PC-9 (cell line): ENCODE measurements at regions of chr14 and their contacts with region 1.

Region 1: GRCh38 chr14:33914676-33915516 is 36.0 kb downstream of the EGLN3 start:
- DNase-seq: peak; percentile 62 to 85
- H3K4me3 ChIP-seq: no peak overlapping the region
- H3K27ac ChIP-seq: 0 out of 2 replicates have a peak overlapping the region, but pooled peaks have one; percentile 25
- H3K4me1 ChIP-seq: peaks cover 33% of the 10 kb centered on the region
- H3K27me3 ChIP-seq: no peaks in the 10 kb centered on the region
- CTCF ChIP-seq: no peak

Region 2: DNA sequence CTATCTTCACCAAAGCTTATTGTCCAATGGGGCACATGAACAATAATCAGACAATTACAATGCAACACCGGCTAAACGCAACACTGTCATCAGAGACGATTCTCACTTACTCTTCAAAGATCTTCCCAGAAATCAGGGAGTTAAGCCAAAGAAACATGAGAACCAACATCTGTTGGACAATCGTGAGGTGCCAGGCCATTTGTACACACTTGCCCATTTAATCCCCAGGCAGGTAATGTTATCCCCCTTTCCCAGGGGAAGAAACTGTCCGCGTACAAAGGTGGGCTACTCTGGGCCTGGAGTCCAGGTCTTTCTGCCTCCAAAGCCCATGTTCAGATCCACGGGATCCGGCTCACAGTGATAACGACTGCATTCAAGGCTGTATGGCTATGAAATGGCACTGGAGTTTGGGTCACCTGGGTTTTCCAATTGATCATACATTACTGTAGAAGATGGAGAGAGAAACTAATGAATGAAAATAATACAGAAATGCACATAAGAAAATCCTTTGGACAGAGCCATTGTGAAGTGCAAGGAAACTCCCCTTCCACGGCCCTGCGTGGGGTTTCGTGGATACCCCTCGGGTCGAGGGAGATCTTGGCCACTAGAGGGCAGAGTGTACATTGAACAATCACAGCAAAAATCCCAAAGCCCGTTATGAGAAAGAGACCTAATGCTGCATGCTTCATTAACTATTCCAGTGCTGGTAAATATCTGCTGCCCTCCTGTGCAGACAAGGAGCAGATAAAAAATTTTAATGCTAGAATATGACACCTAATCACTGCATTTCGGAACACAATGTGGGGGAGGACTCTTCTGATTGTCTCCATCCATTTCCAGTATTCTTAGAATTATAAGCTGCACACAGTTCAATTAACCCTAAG is 75.5 kb before region 1 on chr14:
- CTCF ChIA-PET with region 1: no interaction called
- POLR2A ChIA-PET with region 1: no interaction called
- intact Hi-C with region 1: loop called (anchors 2 kb)
- DNase-seq: peak in 1 of 2 experiments; percentile 11
- H3K4me3 ChIP-seq: no peak overlapping the region
- H3K27ac ChIP-seq: no peak overlapping the region
- H3K4me1 ChIP-seq: peaks cover 30% of the 10 kb centered on the region
- H3K27me3 ChIP-seq: no peaks in the 10 kb centered on the region
- CTCF ChIP-seq: peak; percentile 81

Region 3: GRCh38 chr14:33938131-33938949 is 23.4 kb after region 1 on chr14:
- CTCF ChIA-PET with region 1: no interaction called
- POLR2A ChIA-PET with region 1: no interaction called
- intact Hi-C with region 1: loop called (anchors 1 kb)
- DNase-seq: peak; percentile 82 to 85
- H3K4me3 ChIP-seq: peak overlapping the region; percentile 51; the same call in 1 of the 2 replicates
- H3K27ac ChIP-seq: peak overlapping the region; percentile 85
- H3K4me1 ChIP-seq: peaks cover 45% of the 10 kb centered on the region
- H3K27me3 ChIP-seq: no peaks in the 10 kb centered on the region
- CTCF ChIP-seq: no peak

Region 4: DNA sequence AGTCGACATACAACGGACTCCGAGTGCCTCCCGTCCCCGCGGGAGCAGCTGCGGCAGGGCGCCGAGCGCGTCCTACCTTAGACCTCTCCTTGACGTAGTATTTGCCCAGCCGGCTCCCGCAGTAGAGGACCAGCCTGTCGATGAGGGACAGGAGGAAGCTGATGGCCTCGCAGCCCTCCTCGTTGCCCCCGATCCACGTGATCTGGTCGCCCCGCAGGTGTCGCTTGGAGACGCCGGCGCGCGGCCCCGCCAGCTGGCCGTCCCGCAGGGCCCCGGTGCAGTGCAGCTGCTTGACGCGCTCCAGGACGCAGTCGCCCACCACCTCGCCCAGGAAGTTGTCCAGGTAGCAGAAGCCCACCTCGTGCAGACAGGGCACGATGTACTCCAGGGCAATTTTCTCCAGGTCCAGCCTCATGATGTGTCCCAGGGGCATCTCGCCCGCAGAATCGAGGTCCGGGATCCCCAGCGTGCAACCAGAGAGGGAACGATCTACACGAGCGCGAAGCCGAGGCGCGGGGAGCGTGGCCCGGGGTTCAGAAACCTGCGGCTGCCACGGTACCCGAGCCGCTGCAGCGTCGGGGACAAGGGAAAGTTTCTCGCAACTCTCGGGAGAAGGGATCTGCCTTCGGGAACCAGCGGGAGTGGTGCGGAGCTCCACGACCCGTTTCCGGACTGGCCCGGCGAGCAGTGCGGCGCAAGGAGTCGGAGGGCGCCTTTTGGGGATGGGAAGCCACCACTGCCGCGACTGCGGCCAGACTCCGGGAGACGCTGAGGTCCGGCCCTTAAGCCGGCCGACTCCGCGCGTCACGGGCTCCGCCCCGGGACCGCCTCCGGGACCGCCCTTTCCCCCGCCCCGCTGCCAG is 35.7 kb after region 1 on chr14 and contains the start of gene EGLN3:
- CTCF ChIA-PET with region 1: no interaction called
- POLR2A ChIA-PET with region 1: no interaction called
- intact Hi-C with region 1: loop called (anchors 2 kb)
- DNase-seq: peak; percentile 71 to 90
- H3K4me3 ChIP-seq: peak within 1 kb of the TSS; percentile 82
- H3K27ac ChIP-seq: peak within 1 kb of the TSS; percentile 73
- H3K4me1 ChIP-seq: peaks cover 27% of the 10 kb centered on the region
- H3K27me3 ChIP-seq: no peaks in the 10 kb centered on the region
- CTCF ChIP-seq: no peak
- total RNA-seq, gene EGLN3: 22.6 and 23.6 TPM in 2 replicates

Region 5: DNA sequence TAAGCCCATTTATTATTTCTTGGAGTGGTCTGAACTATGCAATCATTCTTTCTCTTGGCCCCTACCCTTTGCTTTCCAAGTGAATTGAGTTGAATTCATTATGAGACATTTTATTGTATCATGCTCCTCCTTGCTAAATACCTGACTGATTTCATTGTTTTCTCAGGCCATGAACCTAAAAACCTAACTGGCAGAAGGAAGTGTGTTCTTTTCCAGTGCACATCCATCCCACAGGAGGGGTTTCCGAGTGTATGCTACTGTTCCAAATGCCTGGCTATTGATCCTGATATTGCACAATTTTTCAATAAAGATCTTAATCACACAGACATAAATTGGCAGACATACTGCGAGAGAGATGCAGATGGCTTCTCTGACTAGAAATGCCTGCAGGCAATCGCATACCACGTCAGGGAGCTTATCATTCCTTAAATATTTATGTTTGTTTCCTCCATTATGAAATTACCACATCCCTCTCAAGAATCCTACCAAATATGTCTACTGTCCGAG is 198.2 kb after region 1 on chr14:
- CTCF ChIA-PET with region 1: no interaction called
- POLR2A ChIA-PET with region 1: no interaction called
- intact Hi-C with region 1: loop called (anchors 1 kb)
- DNase-seq: peak; percentile 59 to 95
- H3K4me3 ChIP-seq: 0 out of 2 replicates have a peak overlapping the region, but pooled peaks have one; percentile 18
- H3K27ac ChIP-seq: peak overlapping the region; percentile 54
- H3K4me1 ChIP-seq: peaks cover 31% of the 10 kb centered on the region
- H3K27me3 ChIP-seq: no peaks in the 10 kb centered on the region
- CTCF ChIP-seq: no peak